OCI-LY7 (cell line): ENCODE measurements at regions of chr5 and their contacts with region 1.

Region 1: GRCh38 chr5:133460172-133460758 is 152.1 kb downstream of the FSTL4 start:
- DNase-seq: peak; percentile 52
- H3K4me3 ChIP-seq: no peak overlapping the region
- H3K27ac ChIP-seq: no peak overlapping the region
- H3K4me1 ChIP-seq: no peaks in the 10 kb centered on the region
- CTCF ChIP-seq: peak; percentile 92

Region 2: GRCh38 chr5:133423618-133424282 is 36.5 kb before region 1 on chr5:
- CTCF ChIA-PET with region 1: no interaction called
- POLR2A ChIA-PET with region 1: no interaction called
- intact Hi-C with region 1: loop called (anchors 5 kb)
- DNase-seq: peak; percentile 56
- H3K4me3 ChIP-seq: no peak overlapping the region
- H3K27ac ChIP-seq: no peak overlapping the region
- H3K4me1 ChIP-seq: peaks cover 6% of the 10 kb centered on the region
- CTCF ChIP-seq: peak; percentile 88